ENCODE measurements at regions of chr9 and their contacts with region 1.

Region 1: GRCh38 chr9:126490871-126491567 is 122.7 kb upstream of the LMX1B start:
- DNase-seq: peak; percentile 69
- H3K4me3 ChIP-seq: no peak overlapping the region
- H3K27ac ChIP-seq: no peak overlapping the region
- H3K4me1 ChIP-seq: no peaks in the 10 kb centered on the region
- H3K27me3 ChIP-seq: no peaks in the 10 kb centered on the region
- CTCF ChIP-seq: peak; percentile 96
- EP300 ChIP-seq: no peak
- RAD21 ChIP-seq: peak; percentile 93

Region 2: GRCh38 chr9:126301985-126302603 is 188.9 kb before region 1 on chr9:
- CTCF ChIA-PET with region 1: interaction called, 22 read pairs
- POLR2A ChIA-PET with region 1: no interaction called
- DNase-seq: peak; percentile 77
- H3K4me3 ChIP-seq: no peak overlapping the region
- H3K27ac ChIP-seq: no peak overlapping the region
- H3K4me1 ChIP-seq: no peaks in the 10 kb centered on the region; a peak in 1 of 4 replicates
- H3K27me3 ChIP-seq: no peaks in the 10 kb centered on the region
- CTCF ChIP-seq: peak; percentile 69
- EP300 ChIP-seq: no peak
- RAD21 ChIP-seq: peak; percentile 73

Region 3: GRCh38 chr9:126341902-126342301 is 149.1 kb before region 1 on chr9:
- CTCF ChIA-PET with region 1: no interaction called
- POLR2A ChIA-PET with region 1: no interaction called
- DNase-seq: no peak
- H3K4me3 ChIP-seq: no peak overlapping the region
- H3K27ac ChIP-seq: no peak overlapping the region
- H3K4me1 ChIP-seq: no peaks in the 10 kb centered on the region; a peak in 1 of 4 replicates
- H3K27me3 ChIP-seq: no peaks in the 10 kb centered on the region
- CTCF ChIP-seq: no peak
- EP300 ChIP-seq: no peak
- RAD21 ChIP-seq: no peak

Region 4: DNA sequence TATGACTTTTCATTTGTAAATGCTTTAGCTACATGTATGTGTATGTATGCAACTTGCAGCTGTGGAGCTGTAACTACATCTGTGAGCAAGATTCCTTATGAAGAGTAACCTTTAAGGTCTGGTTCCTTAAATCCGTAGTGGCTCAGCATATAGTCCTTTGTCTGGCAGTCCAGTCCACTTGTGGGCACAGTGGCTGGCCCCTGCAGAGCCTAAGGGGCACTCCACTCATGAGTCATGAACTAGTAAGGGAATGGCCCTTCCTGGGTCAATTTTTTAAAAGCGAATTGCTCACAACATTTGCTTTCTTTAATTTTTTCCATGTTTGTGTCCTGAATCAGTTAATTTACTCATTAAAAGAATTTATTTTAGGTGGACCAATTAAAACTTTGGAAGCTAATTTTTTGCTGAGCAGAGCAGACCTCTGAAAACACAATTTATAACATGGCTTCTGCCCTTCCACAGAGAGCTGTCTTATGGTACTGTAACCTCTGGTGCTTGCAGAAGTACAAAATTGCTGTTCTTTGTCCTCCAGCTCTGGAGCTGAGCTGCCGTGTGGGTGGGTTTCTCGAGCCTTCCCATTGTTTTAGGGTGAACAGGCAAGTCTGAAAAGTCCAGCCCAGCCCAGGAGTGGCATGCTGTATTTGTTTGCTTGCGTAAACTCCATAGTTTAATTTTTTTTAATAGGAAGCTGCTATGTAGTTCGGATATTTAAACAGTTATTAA is 54.3 kb before region 1 on chr9:
- CTCF ChIA-PET with region 1: interaction called, 22 read pairs
- POLR2A ChIA-PET with region 1: no interaction called
- DNase-seq: peak; percentile 50
- H3K4me3 ChIP-seq: no peak overlapping the region
- H3K27ac ChIP-seq: peak overlapping the region; percentile 27 to 53; a peak in 2 of 4 replicates
- H3K4me1 ChIP-seq: peaks cover 15 to 40% of the 10 kb centered on the region in 2 experiments
- H3K27me3 ChIP-seq: no peaks in the 10 kb centered on the region
- CTCF ChIP-seq: no peak
- EP300 ChIP-seq: no peak
- RAD21 ChIP-seq: no peak

Region 5: GRCh38 chr9:126456441-126457174 is 34.4 kb before region 1 on chr9:
- CTCF ChIA-PET with region 1: interaction called, 13 read pairs
- POLR2A ChIA-PET with region 1: no interaction called
- DNase-seq: no peak
- H3K4me3 ChIP-seq: no peak overlapping the region
- H3K27ac ChIP-seq: no peak overlapping the region
- H3K4me1 ChIP-seq: no peaks in the 10 kb centered on the region; a peak in 1 of 4 replicates
- H3K27me3 ChIP-seq: no peaks in the 10 kb centered on the region
- CTCF ChIP-seq: no peak
- EP300 ChIP-seq: no peak
- RAD21 ChIP-seq: no peak

Region 6: GRCh38 chr9:126471084-126471624 is 19.9 kb before region 1 on chr9:
- CTCF ChIA-PET with region 1: interaction called, 29 read pairs
- POLR2A ChIA-PET with region 1: no interaction called
- DNase-seq: no peak
- H3K4me3 ChIP-seq: no peak overlapping the region
- H3K27ac ChIP-seq: no peak overlapping the region
- H3K4me1 ChIP-seq: peaks cover 0 to 11% of the 10 kb centered on the region in 2 experiments; a peak in 3 of 4 replicates
- H3K27me3 ChIP-seq: no peaks in the 10 kb centered on the region
- CTCF ChIP-seq: no peak
- EP300 ChIP-seq: no peak
- RAD21 ChIP-seq: no peak

Measured in SK-N-SH (cell line).